ENCODE measurements at regions of chr11 and their contacts with region 1.

Region 1: GRCh38 chr11:47552566-47553416 is at the start of gene CELF1:
- DNase-seq: peak; percentile 84 to 90
- ATAC-seq: peak; percentile 74 to 78
- H3K4me3 ChIP-seq: peak within 1 kb of the TSS; percentile 91 to 95 (median 92)
- H3K27ac ChIP-seq: peak within 1 kb of the TSS; percentile 96 to 99 (median 97)
- H3K4me1 ChIP-seq: peaks cover 45 to 62% of the 10 kb centered on the region in 2 donors
- H3K27me3 ChIP-seq: no peaks in the 10 kb centered on the region
- CTCF ChIP-seq: peak; percentile 78 to 96 (median 94)
- POLR2A ChIP-seq: peak; percentile 88 to 92
- total RNA-seq, gene CELF1: 106 to 185 (median 136) TPM

Region 2: DNA sequence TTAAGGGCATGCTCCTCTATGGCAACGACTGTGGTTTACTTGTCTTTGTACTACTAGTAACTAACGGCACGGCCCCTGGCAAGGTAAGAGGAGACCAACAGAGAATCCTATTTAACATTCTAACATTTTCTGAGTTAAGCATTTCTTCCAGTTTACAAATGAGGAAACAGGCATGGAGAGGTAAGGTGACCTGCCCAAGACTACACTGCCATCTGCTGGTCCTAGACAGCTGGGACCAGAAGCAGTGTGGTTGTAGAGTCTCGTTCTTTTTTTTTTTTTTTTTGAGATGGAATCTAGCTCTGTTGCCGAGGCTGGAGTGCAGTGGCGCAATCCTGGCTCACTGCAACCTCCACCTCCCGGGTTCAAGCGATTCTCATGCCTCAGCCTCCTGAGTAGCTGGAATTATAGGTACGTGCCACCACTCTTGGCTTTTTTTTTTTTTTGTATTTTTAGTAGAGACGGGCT is 98.6 kb before region 1 on chr11:
- in situ Hi-C with region 1: no loop called
- intact Hi-C with region 1: loop called (anchors 1 kb)
- DNase-seq: peak; percentile 51 to 82
- ATAC-seq: peak; percentile 79 to 81
- H3K4me3 ChIP-seq: no peak overlapping the region
- H3K27ac ChIP-seq: no peak overlapping the region
- H3K4me1 ChIP-seq: peaks cover 0 to 7% of the 10 kb centered on the region in 2 donors
- H3K27me3 ChIP-seq: no peaks in the 10 kb centered on the region
- CTCF ChIP-seq: peak; percentile 60 to 84 (median 69)
- POLR2A ChIP-seq: no peak

Region 3: DNA sequence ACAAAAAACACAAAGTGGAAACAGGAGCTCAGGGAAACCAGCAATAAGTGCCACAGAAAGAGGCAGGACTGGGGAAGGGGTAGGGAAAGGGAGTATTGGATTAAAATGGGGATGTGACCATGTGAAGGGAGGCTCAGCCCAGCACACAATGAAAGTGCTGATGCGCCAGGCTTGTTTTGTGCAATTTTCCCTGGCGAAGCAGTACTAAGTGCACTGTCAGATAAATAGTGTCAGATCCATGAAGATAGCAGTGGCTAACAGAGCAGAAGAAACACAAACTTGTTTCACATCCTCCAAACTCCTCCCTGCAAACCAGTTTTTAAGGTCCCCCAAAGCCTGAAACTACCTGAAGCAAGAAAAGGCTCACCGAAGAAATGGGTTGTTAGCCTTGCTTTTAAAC is 53.2 kb before region 1 on chr11:
- in situ Hi-C with region 1: no loop called
- intact Hi-C with region 1: loop called (anchors 5 kb)
- DNase-seq: no peak
- ATAC-seq: no peak
- H3K4me3 ChIP-seq: no peak overlapping the region
- H3K27ac ChIP-seq: peak overlapping the region; percentile 75 to 83 (median 80)
- H3K4me1 ChIP-seq: peaks cover 80 to 83% of the 10 kb centered on the region in 2 donors
- H3K27me3 ChIP-seq: no peaks in the 10 kb centered on the region
- CTCF ChIP-seq: no peak
- POLR2A ChIP-seq: no peak

Region 4: GRCh38 chr11:47523468-47524225 is 29.1 kb before region 1 on chr11:
- in situ Hi-C with region 1: no loop called
- intact Hi-C with region 1: loop called (anchors 2 kb)
- DNase-seq: peak; percentile 51 to 68
- ATAC-seq: peak; percentile 92 to 94
- H3K4me3 ChIP-seq: peak overlapping the region in 3 of 4 donors; percentile 3 to 28 (median 24)
- H3K27ac ChIP-seq: peak overlapping the region; percentile 87 to 94 (median 91)
- H3K4me1 ChIP-seq: peaks cover 91 to 95% of the 10 kb centered on the region in 2 donors
- H3K27me3 ChIP-seq: no peaks in the 10 kb centered on the region
- CTCF ChIP-seq: no peak
- POLR2A ChIP-seq: peak in 1 of 2 donors; percentile 15

Measured in gastrocnemius medialis (tissue), 4 donors.